Vagina (tissue), 2 donors: ENCODE measurements at regions of chr5 and their contacts with region 1.

Region 1: DNA sequence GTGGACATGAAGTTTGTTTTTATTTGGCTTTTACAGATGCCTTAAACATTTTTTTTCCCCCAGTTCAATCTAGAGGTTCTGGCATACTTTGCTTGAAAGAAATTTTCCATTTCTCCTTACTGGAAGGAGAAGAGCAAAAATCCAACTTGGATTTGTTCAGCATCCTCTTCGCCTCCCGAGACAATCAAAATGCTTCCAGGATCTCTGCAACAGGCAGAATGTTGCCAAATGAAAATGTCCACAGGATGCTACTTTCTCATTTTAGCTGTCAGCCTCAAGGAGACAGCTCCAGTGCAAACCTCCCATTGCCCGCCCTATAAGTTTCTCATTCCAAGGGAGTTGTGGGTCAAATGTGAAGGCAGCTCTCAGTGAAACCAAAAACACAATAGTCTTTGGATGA is 1972.1 kb downstream of the MAT2B start:
- DNase-seq: no peak
- H3K4me3 ChIP-seq: no peak overlapping the region
- H3K27ac ChIP-seq: no peak overlapping the region
- H3K4me1 ChIP-seq: no peaks in the 10 kb centered on the region
- H3K27me3 ChIP-seq: no peaks in the 10 kb centered on the region
- CTCF ChIP-seq: no peak
- POLR2A ChIP-seq: no peak

Region 2: GRCh38 chr5:165448753-165449152 is 28.8 kb before region 1 on chr5:
- intact Hi-C with region 1: loop called (anchors 2 kb)
- DNase-seq: no peak
- H3K4me3 ChIP-seq: no peak overlapping the region
- H3K27ac ChIP-seq: no peak overlapping the region
- H3K4me1 ChIP-seq: no peaks in the 10 kb centered on the region
- H3K27me3 ChIP-seq: no peaks in the 10 kb centered on the region
- CTCF ChIP-seq: no peak
- POLR2A ChIP-seq: no peak